BJ (cell line): ENCODE measurements at regions of chr5 and their contacts with region 1.

Region 1: DNA sequence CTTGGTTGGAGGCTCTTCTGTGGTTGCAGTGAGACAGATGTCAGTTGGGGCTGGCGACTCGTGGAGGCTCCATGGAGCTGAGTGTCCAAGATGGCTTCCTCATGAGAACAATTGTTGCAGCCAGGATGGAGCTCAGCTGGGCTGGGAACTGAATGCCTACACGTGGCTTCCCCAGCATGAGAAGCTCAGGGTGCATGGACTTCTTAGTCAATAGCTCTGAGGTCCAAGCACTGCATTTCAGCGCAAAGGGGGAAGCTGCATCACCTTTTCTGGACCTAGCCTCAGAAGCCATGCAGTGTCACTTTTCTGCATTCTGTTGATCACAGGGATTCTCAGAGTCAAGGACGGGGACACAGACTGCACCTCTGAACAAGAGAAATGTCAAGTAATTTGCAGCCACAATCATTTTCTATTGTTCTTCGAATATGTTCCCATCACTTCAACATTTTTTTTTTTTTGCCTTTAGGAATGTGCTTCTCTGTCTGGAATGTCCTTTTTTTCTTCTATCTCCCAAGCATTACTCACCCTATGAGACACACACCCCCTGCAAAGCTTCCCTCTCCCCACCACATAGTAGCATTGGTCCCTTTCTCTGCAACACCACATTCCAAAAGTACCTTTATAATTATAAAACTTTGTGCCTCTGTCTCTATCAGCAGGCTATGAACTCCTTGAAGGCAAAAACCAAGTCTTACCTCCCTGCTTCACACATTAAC is 57.5 kb upstream of the STK32A start:
- DNase-seq: no peak
- H3K4me3 ChIP-seq: no peak overlapping the region
- H3K27me3 ChIP-seq: no peaks in the 10 kb centered on the region
- CTCF ChIP-seq: no peak

Region 2: GRCh38 chr5:146909255-146910068 is 267.8 kb before region 1 on chr5:
- CTCF ChIA-PET with region 1: no interaction called
- POLR2A ChIA-PET with region 1: no interaction called
- DNase-seq: no peak
- H3K4me3 ChIP-seq: no peak overlapping the region
- H3K27me3 ChIP-seq: no peaks in the 10 kb centered on the region
- CTCF ChIP-seq: no peak

Region 3: DNA sequence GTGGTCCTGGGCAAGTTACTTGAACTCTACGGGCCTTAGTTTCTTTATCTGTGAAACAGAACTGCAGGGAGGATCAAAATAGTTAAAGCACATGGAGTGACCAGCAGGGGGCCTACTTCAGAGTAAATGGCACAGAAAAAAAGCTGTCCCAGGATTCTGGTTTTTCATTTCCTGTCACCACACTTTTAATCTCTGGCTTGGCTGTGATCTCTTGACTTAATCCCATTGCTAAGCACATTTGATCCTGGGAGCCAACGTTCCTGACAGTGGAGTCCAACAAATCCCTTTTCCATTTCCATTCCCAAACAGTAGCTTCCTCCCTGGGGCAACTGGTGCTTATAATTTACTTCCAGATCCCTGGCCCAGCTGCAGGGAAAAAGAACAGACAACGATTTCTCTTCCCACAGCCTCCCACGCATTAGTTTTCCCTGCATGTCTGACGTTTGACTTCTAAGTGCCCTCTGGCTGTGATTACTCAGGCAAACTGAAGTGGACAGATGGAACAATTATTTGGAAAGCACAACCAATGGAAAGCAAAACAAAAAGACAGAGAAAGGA is 79.0 kb before region 1 on chr5:
- CTCF ChIA-PET with region 1: interaction called, 10 read pairs
- POLR2A ChIA-PET with region 1: no interaction called
- DNase-seq: peak; percentile 4
- H3K4me3 ChIP-seq: no peak overlapping the region
- H3K27me3 ChIP-seq: no peaks in the 10 kb centered on the region
- CTCF ChIP-seq: peak; percentile 60

Region 4: DNA sequence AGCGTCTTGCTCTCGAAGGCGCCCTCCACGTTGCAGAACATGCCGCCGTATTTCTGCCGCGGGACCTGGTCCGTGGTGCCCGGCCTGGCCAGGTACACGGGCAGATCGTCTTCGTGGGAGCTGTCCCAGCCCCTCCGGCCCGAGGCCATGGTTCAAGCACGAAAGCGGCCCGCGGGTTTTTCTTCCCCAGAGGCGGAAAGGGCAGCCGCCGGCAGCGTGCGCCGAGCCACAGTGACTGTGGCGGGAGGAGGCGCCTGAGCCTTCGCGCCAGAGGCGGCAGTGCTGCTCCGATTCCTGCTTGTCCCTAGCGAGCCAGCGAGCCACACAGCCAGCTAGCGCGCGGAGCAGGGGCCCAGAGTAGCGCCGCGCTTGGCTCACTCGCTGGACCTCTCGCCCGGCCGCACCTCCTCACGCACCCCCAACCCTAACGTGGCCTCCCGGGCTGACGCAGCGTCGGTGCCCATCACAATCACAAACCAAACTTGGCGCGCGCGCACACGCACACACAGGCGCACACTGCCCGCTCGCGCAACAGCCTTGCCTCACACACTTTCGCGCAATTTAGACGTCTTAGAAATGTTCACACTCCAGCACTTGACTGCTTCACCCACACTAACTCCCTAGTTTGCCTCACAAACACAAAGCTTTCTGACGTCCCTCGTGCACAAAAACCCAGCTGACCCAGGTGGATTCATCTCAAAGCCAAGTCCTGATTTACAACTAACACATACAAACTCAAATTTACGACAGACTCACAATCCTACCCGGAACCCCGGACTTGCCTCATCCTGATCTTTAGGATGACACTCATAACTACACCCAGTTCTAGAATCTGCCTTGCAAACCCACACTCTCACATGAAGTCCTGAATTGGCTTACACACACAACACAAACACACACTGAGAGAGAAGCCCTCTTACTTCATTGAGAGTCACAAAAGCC is 332.7 kb after region 1 on chr5 and contains the start of gene DPYSL3:
- CTCF ChIA-PET with region 1: no interaction called
- POLR2A ChIA-PET with region 1: no interaction called
- DNase-seq: no peak
- H3K4me3 ChIP-seq: peak within 1 kb of the TSS; percentile 67
- H3K27me3 ChIP-seq: no peaks in the 10 kb centered on the region
- CTCF ChIP-seq: peak; percentile 54
- polyA plus RNA-seq, gene DPYSL3: 48.3 and 49.6 TPM in 2 replicates